Psoas muscle (tissue), 8 donors: ENCODE measurements at regions of chr3 and their contacts with region 1.

Region 1: GRCh38 chr3:157201648-157202278 is 41.8 kb upstream of the CCNL1 start:
- DNase-seq: no peak
- ATAC-seq: peak in 2 of 4 donors; percentile 57 to 74
- H3K4me3 ChIP-seq: no peak overlapping the region
- H3K27ac ChIP-seq: no peak overlapping the region
- H3K4me1 ChIP-seq: no peaks in the 10 kb centered on the region
- H3K27me3 ChIP-seq: no peaks in the 10 kb centered on the region
- CTCF ChIP-seq: peak; percentile 48

Region 2: GRCh38 chr3:157493627-157494550 is 292.1 kb after region 1 on chr3:
- intact Hi-C with region 1: loop called (anchors 2 to 10 kb)
- DNase-seq: no peak
- ATAC-seq: peak in 1 of 4 donors; percentile 52
- H3K4me3 ChIP-seq: no peak overlapping the region
- H3K27ac ChIP-seq: no peak overlapping the region
- H3K4me1 ChIP-seq: no peaks in the 10 kb centered on the region
- H3K27me3 ChIP-seq: peaks cover 0 to 2% (median 0%) of the 10 kb centered on the region in 3 donors
- CTCF ChIP-seq: peak; percentile 50